Vagina (tissue), 2 donors: ENCODE measurements at regions of chr17 and their contacts with region 1.

Region 1: DNA sequence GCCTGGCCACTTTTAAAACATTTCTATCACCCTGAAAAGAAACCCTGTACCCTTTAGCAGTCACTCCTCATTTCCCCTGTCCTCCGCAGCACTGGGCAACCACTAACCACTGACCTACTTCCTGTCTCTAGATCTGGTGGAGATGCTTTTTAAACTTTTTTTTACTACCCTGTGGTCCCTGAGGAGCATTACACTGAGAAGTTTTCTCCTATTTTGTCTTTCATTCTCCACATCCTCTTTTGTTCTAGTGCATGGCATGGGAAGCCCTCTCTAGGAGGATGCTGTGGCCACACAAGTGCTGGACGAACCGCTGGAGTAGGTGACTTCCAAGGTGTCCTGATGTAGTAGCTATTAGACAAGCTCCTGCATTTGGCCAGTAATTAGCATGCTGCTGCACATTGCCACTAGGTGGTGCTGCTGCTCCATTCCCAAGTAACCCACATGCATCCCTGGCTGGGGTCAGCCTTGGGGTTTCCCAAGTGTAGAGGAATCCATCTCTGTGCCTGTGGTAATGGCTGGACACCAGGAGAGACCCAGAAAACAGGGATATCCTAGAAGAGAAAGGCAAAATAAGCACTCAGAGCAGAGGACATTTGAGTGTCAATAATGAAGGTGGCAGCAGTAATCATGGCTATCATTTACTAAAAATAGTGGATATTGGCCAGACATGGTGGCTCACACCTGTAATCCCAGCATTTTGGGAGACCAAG is 143.8 kb upstream of the CRHR1 start:
- DNase-seq: no peak
- H3K4me3 ChIP-seq: no peak overlapping the region
- H3K27ac ChIP-seq: no peak overlapping the region
- H3K4me1 ChIP-seq: no peaks in the 10 kb centered on the region
- H3K27me3 ChIP-seq: no peaks in the 10 kb centered on the region
- CTCF ChIP-seq: peak; percentile 85 to 96 (median 93)
- POLR2A ChIP-seq: no peak

Region 2: GRCh38 chr17:45834471-45835396 is 194.4 kb after region 1 on chr17:
- intact Hi-C with region 1: loop called (anchors 5 kb)
- DNase-seq: no peak
- H3K4me3 ChIP-seq: no peak overlapping the region
- H3K27ac ChIP-seq: no peak overlapping the region
- H3K4me1 ChIP-seq: no peaks in the 10 kb centered on the region
- H3K27me3 ChIP-seq: no peaks in the 10 kb centered on the region
- CTCF ChIP-seq: no peak
- POLR2A ChIP-seq: no peak